Dendritic cell treated with granulocyte-macrophage colony-stimulating factor and Interleukin-4, amounts not matched to agents 40 ng/mL and 50 ng/mL, for 4 days (primary cell): ENCODE measurements at regions of chr9 and their contacts with region 1.

Region 1: DNA sequence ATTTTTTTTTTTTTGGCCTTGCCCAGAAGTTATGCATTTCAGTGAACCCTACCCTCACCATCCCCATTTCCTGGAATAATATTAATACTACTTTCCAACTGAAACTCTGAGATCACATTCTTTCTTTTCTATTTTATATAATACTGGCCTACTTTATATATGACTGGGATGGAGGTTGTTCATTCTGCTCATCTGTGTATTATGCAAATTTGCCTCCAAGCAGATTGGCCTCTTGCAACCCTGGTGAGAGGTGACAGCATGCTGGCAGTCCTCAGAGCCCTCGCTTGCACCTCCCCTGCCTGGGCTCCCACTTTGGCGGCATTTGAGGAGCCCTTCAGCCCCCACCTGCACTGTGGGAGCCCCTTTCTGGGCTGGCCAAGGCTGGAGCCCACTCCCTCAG is 35.4 kb downstream of the CDKN2A start:
- H3K4me3 Mint-ChIP-seq: no peak overlapping the region
- H3K27ac Mint-ChIP-seq: no peak overlapping the region
- H3K4me1 Mint-ChIP-seq: no peaks in the 10 kb centered on the region
- H3K27me3 Mint-ChIP-seq: peaks cover 51% of the 10 kb centered on the region

Region 2: DNA sequence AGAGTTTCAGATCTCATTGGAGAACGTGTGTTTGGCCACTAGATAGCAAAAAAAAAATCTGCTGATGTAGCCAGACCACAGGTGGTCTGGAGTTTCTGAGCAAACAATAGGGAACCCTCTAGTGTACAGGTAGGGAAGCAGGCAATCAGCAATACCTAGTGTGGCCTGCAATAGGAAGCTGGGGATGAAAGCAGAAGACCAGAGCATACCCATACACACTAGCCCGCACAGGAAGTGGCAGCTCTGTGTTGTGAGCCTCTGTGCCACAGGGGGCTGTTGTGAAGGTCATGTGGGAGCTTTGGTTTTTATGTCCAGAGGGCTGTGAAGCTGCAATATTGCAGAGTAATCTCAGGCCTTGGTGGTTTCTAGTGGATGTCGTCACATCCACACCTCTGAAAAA is 75.2 kb before region 1 on chr9:
- intact Hi-C with region 1: loop called (anchors 10 kb)
- H3K4me3 Mint-ChIP-seq: no peak overlapping the region
- H3K27ac Mint-ChIP-seq: no peak overlapping the region
- H3K4me1 Mint-ChIP-seq: no peaks in the 10 kb centered on the region
- H3K27me3 Mint-ChIP-seq: no peaks in the 10 kb centered on the region